ENCODE measurements at regions of chr17 and their contacts with region 1.

Region 1: GRCh38 chr17:57849874-57850754 is at the start of gene MRPS23:
- DNase-seq: peak; percentile 92 to 99 (median 95)
- ATAC-seq: peak; percentile 91
- H3K4me3 ChIP-seq: peak within 1 kb of the TSS; percentile 99
- H3K4me3 Mint-ChIP-seq: peak within 1 kb of the TSS; percentile 95
- H3K27ac ChIP-seq: peak within 1 kb of the TSS; percentile 88 to 93
- H3K27ac Mint-ChIP-seq: peak within 1 kb of the TSS; percentile 97
- H3K4me1 ChIP-seq: peaks cover 42% of the 10 kb centered on the region
- H3K4me1 Mint-ChIP-seq: peaks cover 45% of the 10 kb centered on the region
- H3K27me3 ChIP-seq: no peaks in the 10 kb centered on the region
- H3K27me3 Mint-ChIP-seq: no peaks in the 10 kb centered on the region
- CTCF ChIP-seq: no peak
- total RNA-seq, gene MRPS23: 14.6 to 14.7 TPM

Region 2: GRCh38 chr17:57084802-57085447 is 765.2 kb before region 1 on chr17 and contains the start of gene AKAP1:
- CTCF ChIA-PET with region 1: no interaction called
- POLR2A ChIA-PET with region 1: interaction called, 13 read pairs
- intact Hi-C with region 1: no loop called
- DNase-seq: peak; percentile 87 to 99 (median 94)
- ATAC-seq: peak; percentile 88
- H3K4me3 ChIP-seq: peak within 1 kb of the TSS; percentile 89
- H3K4me3 Mint-ChIP-seq: peak within 1 kb of the TSS; percentile 95
- H3K27ac ChIP-seq: peak within 1 kb of the TSS; percentile 84 to 85
- H3K27ac Mint-ChIP-seq: peak within 1 kb of the TSS; percentile 89
- H3K4me1 ChIP-seq: peaks cover 20% of the 10 kb centered on the region
- H3K4me1 Mint-ChIP-seq: peaks cover 36% of the 10 kb centered on the region
- H3K27me3 ChIP-seq: no peaks in the 10 kb centered on the region
- H3K27me3 Mint-ChIP-seq: no peaks in the 10 kb centered on the region
- CTCF ChIP-seq: no peak
- total RNA-seq, gene AKAP1: 20.3 to 23.1 TPM

Region 3: GRCh38 chr17:57697891-57698711 is 152.0 kb before region 1 on chr17:
- CTCF ChIA-PET with region 1: no interaction called
- POLR2A ChIA-PET with region 1: no interaction called
- intact Hi-C with region 1: no loop called
- DNase-seq: peak in 1 of 14 experiments; percentile 15
- ATAC-seq: no peak
- H3K4me3 ChIP-seq: no peak overlapping the region
- H3K4me3 Mint-ChIP-seq: no peak overlapping the region
- H3K27ac ChIP-seq: no peak overlapping the region
- H3K27ac Mint-ChIP-seq: no peak overlapping the region
- H3K4me1 ChIP-seq: peaks cover 14% of the 10 kb centered on the region
- H3K4me1 Mint-ChIP-seq: no peaks in the 10 kb centered on the region
- H3K27me3 ChIP-seq: no peaks in the 10 kb centered on the region
- H3K27me3 Mint-ChIP-seq: no peaks in the 10 kb centered on the region
- CTCF ChIP-seq: no peak

Region 4: GRCh38 chr17:57833179-57833939 is 16.8 kb before region 1 on chr17:
- CTCF ChIA-PET with region 1: interaction called, 3 read pairs
- POLR2A ChIA-PET with region 1: interaction called, 11 read pairs
- intact Hi-C with region 1: no loop called
- DNase-seq: peak; percentile 43 to 86 (median 58)
- ATAC-seq: peak; percentile 85
- H3K4me3 ChIP-seq: peak overlapping the region; percentile 46
- H3K4me3 Mint-ChIP-seq: no peak overlapping the region
- H3K27ac ChIP-seq: no peak overlapping the region
- H3K27ac Mint-ChIP-seq: no peak overlapping the region
- H3K4me1 ChIP-seq: peaks cover 6% of the 10 kb centered on the region
- H3K4me1 Mint-ChIP-seq: peaks cover 6% of the 10 kb centered on the region
- H3K27me3 ChIP-seq: no peaks in the 10 kb centered on the region
- H3K27me3 Mint-ChIP-seq: no peaks in the 10 kb centered on the region
- CTCF ChIP-seq: peak; percentile 96

Region 5: DNA sequence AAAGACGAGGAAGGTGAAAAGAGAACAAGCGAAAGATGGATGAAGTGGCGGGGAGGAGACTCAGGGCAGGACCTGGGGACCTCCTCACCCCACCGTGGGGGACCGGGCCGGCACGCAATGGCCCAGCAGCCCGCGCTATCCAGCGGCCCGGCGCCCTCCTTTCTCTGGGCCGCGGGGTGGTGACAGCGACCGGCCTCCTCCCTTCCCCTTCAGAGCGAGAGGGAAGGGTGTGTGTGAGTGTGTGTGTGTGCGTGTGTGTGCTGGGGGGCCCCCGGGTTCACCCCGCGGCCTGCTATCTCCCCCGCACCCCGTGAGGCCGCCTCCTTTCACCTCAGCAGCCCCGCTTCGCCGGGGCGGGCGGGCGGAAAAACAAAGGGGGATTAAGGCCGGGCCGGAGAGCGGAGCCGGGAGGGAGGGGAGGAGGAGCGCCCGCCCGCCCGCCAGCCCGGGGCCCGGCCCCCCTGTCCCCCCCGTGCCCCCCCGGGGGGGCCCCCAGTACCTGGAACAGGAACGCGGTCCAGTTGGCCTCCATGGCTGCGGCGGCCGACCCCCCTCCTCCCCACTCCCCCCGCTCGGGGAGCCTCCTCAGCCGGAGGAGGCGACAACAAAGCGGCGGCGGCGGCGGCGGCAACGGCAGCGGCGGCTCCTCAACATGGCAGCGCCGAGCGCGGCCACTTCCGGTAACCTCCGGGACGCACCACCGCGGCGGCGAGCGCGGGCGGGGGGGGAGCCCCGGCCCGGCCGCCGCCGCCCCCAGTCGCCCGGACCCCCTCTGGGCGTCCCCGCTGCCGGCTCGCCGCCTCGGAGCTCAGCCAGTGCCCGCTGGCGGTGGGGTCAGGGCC is 137.7 kb after region 1 on chr17 and contains the start of gene VEZF1:
- CTCF ChIA-PET with region 1: no interaction called
- POLR2A ChIA-PET with region 1: interaction called, 27 read pairs
- intact Hi-C with region 1: no loop called
- DNase-seq: peak; percentile 67 to 90 (median 78)
- ATAC-seq: peak; percentile 75
- H3K4me3 ChIP-seq: peak within 1 kb of the TSS; percentile 86
- H3K4me3 Mint-ChIP-seq: peak within 1 kb of the TSS; percentile 97
- H3K27ac ChIP-seq: peak within 1 kb of the TSS; percentile 50 to 74
- H3K27ac Mint-ChIP-seq: peak within 1 kb of the TSS; percentile 97
- H3K4me1 ChIP-seq: peaks cover 24% of the 10 kb centered on the region
- H3K4me1 Mint-ChIP-seq: peaks cover 70% of the 10 kb centered on the region
- H3K27me3 ChIP-seq: no peaks in the 10 kb centered on the region
- H3K27me3 Mint-ChIP-seq: no peaks in the 10 kb centered on the region
- CTCF ChIP-seq: no peak
- total RNA-seq, gene VEZF1: 41.6 to 41.7 TPM

Region 6: DNA sequence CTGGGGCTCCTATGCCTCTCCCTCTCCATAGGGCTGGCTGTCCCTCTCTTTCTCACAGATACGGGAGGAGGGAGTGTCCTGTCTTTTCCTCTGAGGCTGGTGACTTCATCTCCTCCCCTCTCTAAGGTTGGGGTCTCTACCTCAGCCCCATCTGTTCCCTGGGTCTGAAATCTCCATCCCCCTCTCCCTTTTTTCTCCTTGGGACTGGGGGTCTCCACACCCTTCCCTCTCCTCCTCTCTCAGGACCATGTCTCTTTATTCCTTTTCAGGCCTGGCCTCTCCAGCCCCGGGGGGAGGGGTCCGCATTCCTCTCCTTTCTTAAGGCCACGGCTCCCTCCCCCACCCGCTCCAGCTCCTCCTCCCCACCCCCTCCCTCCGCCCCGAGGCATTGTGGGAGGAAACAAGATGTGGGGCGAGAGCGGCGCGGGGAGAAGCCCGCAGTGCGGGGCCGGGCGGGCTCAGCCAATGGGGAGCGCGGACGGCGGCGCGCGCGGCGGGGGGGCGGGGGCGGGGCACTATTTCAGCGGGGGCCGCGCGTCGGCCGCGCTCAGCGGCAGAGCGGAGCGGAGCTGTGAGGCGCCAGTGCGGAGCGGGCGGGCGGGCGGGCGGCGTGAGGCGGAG is 232.9 kb after region 1 on chr17 and contains the start of gene DYNLL2:
- CTCF ChIA-PET with region 1: no interaction called
- POLR2A ChIA-PET with region 1: interaction called, 28 read pairs
- intact Hi-C with region 1: loop called in 1 of 2 experiments (anchors 1 kb)
- DNase-seq: peak; percentile 81 to 94 (median 90)
- ATAC-seq: peak; percentile 78
- H3K4me3 ChIP-seq: peak within 1 kb of the TSS; percentile 71
- H3K4me3 Mint-ChIP-seq: peak within 1 kb of the TSS; percentile 91
- H3K27ac ChIP-seq: peak within 1 kb of the TSS; percentile 63 to 69
- H3K27ac Mint-ChIP-seq: peak within 1 kb of the TSS; percentile 89
- H3K4me1 ChIP-seq: peaks cover 38% of the 10 kb centered on the region
- H3K4me1 Mint-ChIP-seq: peaks cover 36% of the 10 kb centered on the region
- H3K27me3 ChIP-seq: no peaks in the 10 kb centered on the region
- H3K27me3 Mint-ChIP-seq: no peaks in the 10 kb centered on the region
- CTCF ChIP-seq: no peak
- total RNA-seq, gene DYNLL2: 30.9 to 32.2 TPM

Region 7: GRCh38 chr17:58337600-58338453 is 487.7 kb after region 1 on chr17:
- CTCF ChIA-PET with region 1: no interaction called
- POLR2A ChIA-PET with region 1: interaction called, 4 read pairs
- intact Hi-C with region 1: loop called in 1 of 2 experiments (anchors 10 kb)
- DNase-seq: peak; percentile 78 to 96 (median 88)
- ATAC-seq: peak; percentile 73
- H3K4me3 ChIP-seq: peak overlapping the region; percentile 84
- H3K4me3 Mint-ChIP-seq: peak overlapping the region; percentile 90
- H3K27ac ChIP-seq: peak overlapping the region; percentile 97 to 98
- H3K27ac Mint-ChIP-seq: peak overlapping the region; percentile 84
- H3K4me1 ChIP-seq: peaks cover 96% of the 10 kb centered on the region
- H3K4me1 Mint-ChIP-seq: peaks cover 92% of the 10 kb centered on the region
- H3K27me3 ChIP-seq: no peaks in the 10 kb centered on the region
- H3K27me3 Mint-ChIP-seq: no peaks in the 10 kb centered on the region
- CTCF ChIP-seq: no peak

Measured in CD4-positive, alpha-beta T cell (primary cell).